ENCODE measurements at regions of chrX and their contacts with region 1.

Region 1: GRCh38 chrX:45515262-45516215 is 314.9 kb upstream of the DIPK2B start:
- DNase-seq: peak; percentile 67
- H3K4me3 ChIP-seq: no peak overlapping the region
- H3K27ac ChIP-seq: peak overlapping the region; percentile 66
- H3K4me1 ChIP-seq: peaks cover 26% of the 10 kb centered on the region
- H3K27me3 ChIP-seq: no peaks in the 10 kb centered on the region
- CTCF ChIP-seq: peak; percentile 43 to 53
- POLR2A ChIP-seq: no peak

Region 2: GRCh38 chrX:45422216-45422925 is 93.2 kb before region 1 on chrX:
- CTCF ChIA-PET with region 1: no interaction called
- POLR2A ChIA-PET with region 1: no interaction called
- dilution Hi-C with region 1: no loop called
- intact Hi-C with region 1: no loop called
- DNase-seq: no peak
- H3K4me3 ChIP-seq: no peak overlapping the region
- H3K27ac ChIP-seq: no peak overlapping the region
- H3K4me1 ChIP-seq: no peaks in the 10 kb centered on the region
- H3K27me3 ChIP-seq: no peaks in the 10 kb centered on the region
- CTCF ChIP-seq: no peak
- POLR2A ChIP-seq: no peak

Region 3: DNA sequence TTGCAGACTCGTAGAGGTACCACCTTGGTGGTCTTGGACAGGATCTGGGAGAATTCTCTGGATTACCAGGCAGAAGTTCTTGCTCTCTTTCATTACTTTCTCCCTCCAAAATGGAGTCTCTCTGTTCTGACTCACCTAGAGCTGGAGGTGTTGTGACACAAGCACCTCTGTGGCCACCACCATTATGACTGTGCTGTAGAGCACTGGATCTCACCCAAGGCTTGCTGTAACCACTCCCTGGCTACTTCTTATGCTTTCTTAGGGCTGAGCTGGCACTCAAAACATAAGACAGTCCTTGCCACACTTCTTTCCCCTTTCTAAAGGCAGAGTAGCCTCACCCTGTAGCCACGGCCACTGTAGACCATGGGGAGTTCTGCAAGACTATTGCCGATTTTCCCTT is 18.2 kb before region 1 on chrX:
- CTCF ChIA-PET with region 1: no interaction called
- POLR2A ChIA-PET with region 1: no interaction called
- dilution Hi-C with region 1: no loop called
- intact Hi-C with region 1: no loop called
- DNase-seq: no peak
- H3K4me3 ChIP-seq: no peak overlapping the region
- H3K27ac ChIP-seq: no peak overlapping the region
- H3K4me1 ChIP-seq: no peaks in the 10 kb centered on the region
- H3K27me3 ChIP-seq: no peaks in the 10 kb centered on the region
- CTCF ChIP-seq: no peak
- POLR2A ChIP-seq: no peak

Region 4: DNA sequence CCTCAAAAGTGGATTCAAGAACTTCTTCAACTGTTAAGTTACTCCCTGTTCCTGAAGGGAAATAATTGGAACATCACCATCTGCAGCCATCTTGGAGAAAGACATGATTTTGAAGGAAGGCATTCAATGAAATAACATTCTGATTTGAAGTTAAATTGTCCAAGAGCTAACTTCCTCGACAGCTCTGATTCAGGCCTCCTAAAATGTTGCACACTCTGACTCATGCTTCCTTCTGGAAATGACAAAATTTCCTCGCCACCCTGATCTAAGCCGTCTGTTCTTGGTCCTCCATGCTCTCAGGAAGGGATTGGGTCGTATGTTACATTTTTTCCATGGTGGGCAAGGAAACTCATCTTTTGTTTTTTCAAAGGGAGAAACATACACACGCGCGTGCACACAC is 182.1 kb after region 1 on chrX:
- CTCF ChIA-PET with region 1: interaction called, 4 read pairs
- POLR2A ChIA-PET with region 1: no interaction called
- dilution Hi-C with region 1: no loop called
- intact Hi-C with region 1: loop called (anchors 2 kb)
- DNase-seq: peak; percentile 94
- H3K4me3 ChIP-seq: no peak overlapping the region
- H3K27ac ChIP-seq: peak overlapping the region; percentile 92
- H3K4me1 ChIP-seq: peaks cover 22% of the 10 kb centered on the region
- H3K27me3 ChIP-seq: no peaks in the 10 kb centered on the region
- CTCF ChIP-seq: no peak
- POLR2A ChIP-seq: no peak

Region 5: DNA sequence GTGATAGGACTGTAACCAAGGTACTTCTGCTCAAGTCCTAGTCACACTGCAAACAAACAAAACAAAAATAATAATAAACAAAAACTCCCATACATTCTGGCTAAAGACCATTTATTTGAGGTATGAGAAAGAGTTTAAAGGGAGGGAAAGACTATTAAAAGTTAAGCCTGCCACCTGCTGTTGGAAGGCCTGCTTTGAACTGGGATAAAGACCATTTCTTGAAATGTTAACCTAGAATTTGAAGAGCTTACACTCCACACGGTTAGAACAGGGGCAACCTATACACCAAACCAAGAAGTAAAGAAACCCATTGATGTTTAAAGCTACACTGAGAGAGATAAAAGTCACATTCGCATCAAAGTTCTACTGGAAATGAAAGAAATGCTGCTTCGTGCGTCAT is 233.8 kb after region 1 on chrX:
- CTCF ChIA-PET with region 1: interaction called, 10 read pairs
- POLR2A ChIA-PET with region 1: no interaction called
- dilution Hi-C with region 1: no loop called
- intact Hi-C with region 1: loop called (anchors 1 kb)
- DNase-seq: peak; percentile 43
- H3K4me3 ChIP-seq: no peak overlapping the region
- H3K27ac ChIP-seq: peak overlapping the region; percentile 26
- H3K4me1 ChIP-seq: peaks cover 45% of the 10 kb centered on the region
- H3K27me3 ChIP-seq: no peaks in the 10 kb centered on the region
- CTCF ChIP-seq: no peak
- POLR2A ChIP-seq: no peak

Region 6: DNA sequence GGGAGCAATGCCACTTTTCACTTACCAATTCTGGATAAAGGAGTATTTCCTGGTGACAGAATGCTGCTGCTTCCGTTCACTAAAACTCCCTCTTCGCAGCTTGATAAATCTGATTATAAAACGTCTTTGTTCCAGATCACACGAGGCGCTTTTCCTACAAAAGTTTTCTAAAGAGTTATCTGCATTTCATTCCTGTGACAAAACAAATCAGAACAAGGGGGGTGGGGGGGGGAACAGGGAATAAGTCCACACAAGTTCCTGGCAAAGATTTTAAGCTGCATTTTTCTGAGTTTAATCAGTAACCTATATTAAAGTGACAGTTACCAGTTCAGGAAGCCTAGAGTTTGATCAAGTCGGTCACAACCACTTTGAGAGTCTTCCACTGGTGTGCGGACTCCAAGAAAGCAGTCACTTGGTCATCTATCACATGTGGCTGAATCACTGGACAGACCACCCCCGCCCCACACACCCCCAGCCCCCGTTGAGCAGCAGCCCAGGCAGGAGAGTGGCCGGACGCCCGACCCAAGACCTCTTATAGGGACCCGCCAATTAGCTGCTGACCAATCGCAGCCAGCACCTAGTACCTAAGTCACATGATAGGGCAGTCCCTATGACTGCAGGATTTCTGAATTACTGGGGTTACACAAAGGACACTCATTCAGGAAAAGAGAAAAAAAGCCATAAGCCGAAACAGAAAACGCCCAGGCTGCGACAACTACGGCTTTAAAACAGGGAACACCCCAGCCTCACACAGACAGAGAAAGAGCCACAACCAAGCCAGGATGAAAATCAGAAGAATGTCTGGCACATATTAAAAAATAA is 254.4 kb after region 1 on chrX:
- CTCF ChIA-PET with region 1: interaction called, 13 read pairs
- POLR2A ChIA-PET with region 1: interaction called, 3 read pairs
- dilution Hi-C with region 1: no loop called
- intact Hi-C with region 1: no loop called
- DNase-seq: peak; percentile 87
- H3K4me3 ChIP-seq: peak overlapping the region; percentile 55 to 100 (median 94)
- H3K27ac ChIP-seq: peak overlapping the region; percentile 87
- H3K4me1 ChIP-seq: peaks cover 40% of the 10 kb centered on the region
- H3K27me3 ChIP-seq: no peaks in the 10 kb centered on the region
- CTCF ChIP-seq: no peak
- POLR2A ChIP-seq: peak; percentile 70

Region 7: GRCh38 chrX:45843518-45843917 is 328.0 kb after region 1 on chrX:
- CTCF ChIA-PET with region 1: no interaction called
- POLR2A ChIA-PET with region 1: no interaction called
- dilution Hi-C with region 1: no loop called
- intact Hi-C with region 1: loop called (anchors 1 kb)
- DNase-seq: peak; percentile 22
- H3K4me3 ChIP-seq: no peak overlapping the region
- H3K27ac ChIP-seq: no peak overlapping the region
- H3K4me1 ChIP-seq: peaks cover 11% of the 10 kb centered on the region
- H3K27me3 ChIP-seq: no peaks in the 10 kb centered on the region
- CTCF ChIP-seq: no peak
- POLR2A ChIP-seq: no peak

Region 8: GRCh38 chrX:46408553-46409407 is 893.2 kb after region 1 on chrX:
- CTCF ChIA-PET with region 1: interaction called, 10 read pairs
- POLR2A ChIA-PET with region 1: no interaction called
- dilution Hi-C with region 1: no loop called
- intact Hi-C with region 1: loop called (anchors 10 kb)
- DNase-seq: peak; percentile 74
- H3K4me3 ChIP-seq: no peak overlapping the region
- H3K27ac ChIP-seq: no peak overlapping the region
- H3K4me1 ChIP-seq: no peaks in the 10 kb centered on the region
- H3K27me3 ChIP-seq: no peaks in the 10 kb centered on the region
- CTCF ChIP-seq: peak; percentile 51 to 52
- POLR2A ChIP-seq: no peak